K562 (cell line): ENCODE measurements at regions of chr15 and their contacts with region 1.

Region 1: GRCh38 chr15:61315471-61315870 is 86.4 kb upstream of the RORA start:
- DNase-seq: no peak
- ATAC-seq: no peak
- H3K4me3 ChIP-seq: no peak overlapping the region
- H3K27ac ChIP-seq: no peak overlapping the region
- H3K4me1 ChIP-seq: no peaks in the 10 kb centered on the region
- H3K27me3 ChIP-seq: no peaks in the 10 kb centered on the region
- CTCF ChIP-seq: no peak
- EP300 ChIP-seq: no peak
- POLR2A ChIP-seq: no peak
- RAD21 ChIP-seq: no peak

Region 2: GRCh38 chr15:61299075-61299763 is 16.3 kb before region 1 on chr15:
- CTCF ChIA-PET with region 1: no interaction called
- POLR2A ChIA-PET with region 1: interaction called, 13 read pairs
- in situ Hi-C with region 1: no loop called
- intact Hi-C with region 1: no loop called
- DNase-seq: no peak
- ATAC-seq: no peak
- H3K4me3 ChIP-seq: no peak overlapping the region
- H3K27ac ChIP-seq: no peak overlapping the region
- H3K4me1 ChIP-seq: no peaks in the 10 kb centered on the region
- H3K27me3 ChIP-seq: 0 out of 5 replicates have a peak, but pooled peaks cover 0 to 4% of the 10 kb centered on the region in 2 experiments
- CTCF ChIP-seq: no peak
- EP300 ChIP-seq: no peak
- POLR2A ChIP-seq: no peak
- RAD21 ChIP-seq: no peak

Region 3: DNA sequence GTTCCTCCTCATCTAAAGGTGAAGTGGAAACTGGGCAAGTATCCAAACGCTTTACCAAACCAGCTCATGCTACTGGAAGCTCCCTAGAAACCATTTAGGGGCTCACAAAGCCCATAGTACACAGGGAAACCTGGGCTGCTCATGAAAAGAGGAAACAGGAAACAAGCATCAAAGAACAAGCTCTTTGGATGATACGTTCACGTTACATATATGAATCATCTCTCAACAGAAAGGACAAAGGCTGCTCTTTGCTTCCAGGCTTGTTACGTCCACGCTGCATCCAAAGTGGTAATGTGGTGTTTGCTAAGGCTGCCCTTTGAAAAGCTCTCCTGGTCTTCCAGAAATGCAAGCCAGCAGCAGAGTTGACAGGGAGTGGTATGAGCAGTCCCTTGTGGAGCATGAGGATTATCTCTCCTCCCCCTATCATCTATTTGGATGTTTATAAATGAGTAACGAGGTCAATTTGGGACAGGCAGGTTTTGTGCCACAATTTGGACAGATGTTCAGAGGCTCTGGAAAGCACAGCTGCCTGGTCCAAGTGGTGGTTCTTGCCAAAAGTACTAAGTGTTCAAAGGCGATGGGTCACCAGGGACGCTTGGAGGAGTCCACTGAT is 11.7 kb after region 1 on chr15:
- CTCF ChIA-PET with region 1: no interaction called
- POLR2A ChIA-PET with region 1: no interaction called
- in situ Hi-C with region 1: no loop called
- intact Hi-C with region 1: no loop called
- DNase-seq: no peak
- ATAC-seq: no peak
- H3K4me3 ChIP-seq: no peak overlapping the region
- H3K27ac ChIP-seq: no peak overlapping the region
- H3K4me1 ChIP-seq: no peaks in the 10 kb centered on the region
- H3K27me3 ChIP-seq: no peaks in the 10 kb centered on the region
- CTCF ChIP-seq: no peak
- EP300 ChIP-seq: no peak
- POLR2A ChIP-seq: no peak
- RAD21 ChIP-seq: no peak